ENCODE measurements at regions of chrX and their contacts with region 1.

Region 1: DNA sequence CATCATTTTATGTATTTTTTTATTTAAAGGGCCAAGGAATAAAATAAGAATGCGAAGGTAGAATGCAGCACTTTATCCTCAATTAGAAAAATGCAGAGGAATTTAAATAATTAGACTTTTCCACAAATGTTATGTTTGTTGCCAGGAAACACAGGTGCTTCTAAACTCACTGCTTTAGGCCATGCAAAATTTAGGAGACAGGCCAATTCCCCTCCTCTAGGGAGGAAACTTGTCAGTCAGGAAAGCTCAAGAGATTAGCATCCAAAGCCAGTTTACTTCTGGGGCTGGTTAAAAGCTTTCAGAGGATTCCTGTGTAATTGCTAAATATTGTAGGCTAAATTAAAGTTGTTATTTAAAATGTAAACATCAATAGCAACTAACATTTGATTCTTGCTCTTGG is 124.5 kb downstream of the DMD start:
- DNase-seq: no peak
- ATAC-seq: no peak
- H3K4me3 ChIP-seq: no peak overlapping the region
- H3K27ac ChIP-seq: no peak overlapping the region
- H3K4me1 ChIP-seq: peaks cover 0 to 20% (median 0%) of the 10 kb centered on the region in 12 donors
- H3K27me3 ChIP-seq: no peaks in the 10 kb centered on the region
- CTCF ChIP-seq: no peak
- POLR2A ChIP-seq: no peak

Region 2: DNA sequence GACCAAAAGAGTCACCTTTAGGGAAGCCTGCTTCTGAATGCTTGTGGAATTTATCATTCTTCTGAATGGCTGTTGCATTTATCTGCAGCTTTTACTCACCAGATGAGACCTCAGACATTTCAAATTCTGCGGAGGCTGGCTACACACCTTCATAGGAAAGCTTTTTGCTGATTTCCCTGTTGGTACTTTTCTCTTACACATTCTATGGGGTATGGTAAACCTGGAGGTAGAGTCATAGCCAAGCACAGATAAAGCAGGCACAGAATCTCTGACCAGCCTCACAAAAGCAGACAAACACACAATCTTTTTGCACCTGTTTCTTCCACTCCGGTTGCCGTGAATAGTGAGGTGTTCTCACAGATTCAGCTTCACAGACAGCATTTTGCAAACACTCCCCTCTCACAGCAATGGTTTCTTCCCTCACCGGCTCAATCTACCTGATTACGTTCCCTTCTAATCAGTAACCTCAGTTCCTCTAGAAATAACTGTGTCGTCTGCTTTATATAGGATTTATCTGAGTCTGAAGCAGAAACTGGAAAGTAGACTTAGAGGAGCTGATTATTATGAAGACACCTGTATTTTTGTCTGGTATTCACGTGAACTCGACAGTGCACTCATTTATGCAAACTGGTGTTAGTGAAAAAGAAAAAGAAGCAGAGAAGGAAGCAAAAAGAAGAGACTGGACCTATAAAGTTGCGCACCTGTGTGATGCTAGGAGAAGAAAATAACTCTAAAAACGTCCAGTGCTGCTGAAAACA is 41.3 kb after region 1 on chrX:
- intact Hi-C with region 1: no loop called
- DNase-seq: no peak
- ATAC-seq: no peak
- H3K4me3 ChIP-seq: no peak overlapping the region
- H3K27ac ChIP-seq: no peak overlapping the region
- H3K4me1 ChIP-seq: peaks cover 0 to 4% (median 0%) of the 10 kb centered on the region in 12 donors
- H3K27me3 ChIP-seq: no peaks in the 10 kb centered on the region
- CTCF ChIP-seq: no peak
- POLR2A ChIP-seq: no peak

Region 3: GRCh38 chrX:33211356-33212260 is 124.7 kb after region 1 on chrX and contains the start of gene DMD:
- intact Hi-C with region 1: loop called in 1 of 10 experiments (anchors 10 kb)
- DNase-seq: peak; percentile 40 to 71 (median 57)
- ATAC-seq: peak; percentile 95 to 98 (median 96)
- H3K4me3 ChIP-seq: peak within 1 kb of the TSS; percentile 11 to 68 (median 48)
- H3K27ac ChIP-seq: peak within 1 kb of the TSS; percentile 48 to 93 (median 77)
- H3K4me1 ChIP-seq: no peaks in the 10 kb centered on the region
- H3K27me3 ChIP-seq: no peaks in the 10 kb centered on the region
- CTCF ChIP-seq: peak in 1 of 12 donors; percentile 10
- POLR2A ChIP-seq: peak; percentile 25 to 39
- total RNA-seq, gene DMD: 127 to 236 (median 169) TPM

Region 4: GRCh38 chrX:33298622-33299021 is 211.7 kb after region 1 on chrX:
- intact Hi-C with region 1: no loop called
- DNase-seq: no peak
- ATAC-seq: peak in 1 of 4 donors; percentile 55
- H3K4me3 ChIP-seq: no peak overlapping the region
- H3K27ac ChIP-seq: no peak overlapping the region
- H3K4me1 ChIP-seq: no peaks in the 10 kb centered on the region
- H3K27me3 ChIP-seq: no peaks in the 10 kb centered on the region
- CTCF ChIP-seq: no peak
- POLR2A ChIP-seq: no peak